Aorta (tissue), 5 donors: ENCODE measurements at regions of chr14 and their contacts with region 1.

Region 1: GRCh38 chr14:25111061-25111601 is 61.2 kb upstream of the STXBP6 start:
- DNase-seq: no peak
- ATAC-seq: no peak
- H3K4me3 ChIP-seq: no peak overlapping the region
- H3K27ac ChIP-seq: peak overlapping the region in 1 of 2 donors; percentile 48
- H3K4me1 ChIP-seq: peaks cover 0 to 3% of the 10 kb centered on the region in 2 donors
- H3K27me3 ChIP-seq: no peaks in the 10 kb centered on the region

Region 2: GRCh38 chr14:25090716-25091454 is 20.2 kb before region 1 on chr14:
- intact Hi-C with region 1: loop called in 1 of 2 experiments (anchors 2 kb)
- DNase-seq: no peak
- ATAC-seq: no peak
- H3K4me3 ChIP-seq: no peak overlapping the region
- H3K27ac ChIP-seq: peak overlapping the region in 1 of 2 donors; percentile 69
- H3K4me1 ChIP-seq: no peaks in the 10 kb centered on the region
- H3K27me3 ChIP-seq: no peaks in the 10 kb centered on the region